Naive thymus-derived CD4-positive, alpha-beta T cell (primary cell): ENCODE measurements at regions of chr1 and their contacts with region 1.

Region 1: DNA sequence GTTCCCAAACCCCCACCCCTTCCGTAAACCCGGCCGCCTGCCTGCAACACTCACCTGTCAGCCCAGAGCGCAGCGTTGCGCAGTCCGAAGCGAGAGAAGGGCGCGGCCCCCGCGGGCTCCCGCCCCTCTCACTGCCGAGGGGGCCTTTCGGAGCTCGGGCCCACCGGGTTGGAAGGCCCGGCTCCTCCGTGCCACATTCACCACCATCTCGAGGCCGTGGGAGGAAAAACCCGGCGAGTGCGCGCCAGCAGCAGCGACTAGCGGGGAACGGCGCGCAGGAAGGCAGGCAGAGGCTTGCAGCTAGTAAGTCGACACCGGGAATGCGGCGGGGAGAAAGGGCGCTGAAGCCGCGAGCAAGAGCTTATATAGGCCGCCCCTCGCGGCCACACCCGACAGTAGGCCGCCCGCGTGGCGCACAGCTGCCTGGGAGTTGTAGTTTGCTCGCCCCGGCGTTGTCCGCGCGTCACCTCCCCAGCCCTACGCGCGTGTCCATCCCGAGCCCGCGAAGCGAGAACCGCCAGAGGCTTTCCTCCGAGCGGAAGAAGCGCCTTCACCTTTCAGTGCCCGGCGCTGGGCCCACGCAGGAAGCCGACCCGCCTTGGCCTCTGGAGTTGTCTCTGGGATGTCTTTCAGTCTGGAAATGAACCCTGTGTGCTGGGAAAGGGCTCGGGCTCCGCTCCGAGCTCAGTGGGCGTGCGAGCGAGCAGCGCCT is 10.4 kb upstream of the RAB42 start:
- DNase-seq: peak; percentile 85 to 96 (median 91)
- ATAC-seq: peak; percentile 95
- H3K4me3 ChIP-seq: peak overlapping the region; percentile 93
- H3K4me3 Mint-ChIP-seq: peak overlapping the region; percentile 94 to 99 (median 97)
- H3K27ac ChIP-seq: peak overlapping the region; percentile 84
- H3K27ac Mint-ChIP-seq: peak overlapping the region; percentile 86 to 96 (median 93)
- H3K4me1 ChIP-seq: peaks cover 20 to 23% of the 10 kb centered on the region in 2 donors
- H3K4me1 Mint-ChIP-seq: peaks cover 22 to 48% (median 37%) of the 10 kb centered on the region in 7 donors
- H3K27me3 ChIP-seq: no peaks in the 10 kb centered on the region
- H3K27me3 Mint-ChIP-seq: no peaks in the 10 kb centered on the region

Region 2: DNA sequence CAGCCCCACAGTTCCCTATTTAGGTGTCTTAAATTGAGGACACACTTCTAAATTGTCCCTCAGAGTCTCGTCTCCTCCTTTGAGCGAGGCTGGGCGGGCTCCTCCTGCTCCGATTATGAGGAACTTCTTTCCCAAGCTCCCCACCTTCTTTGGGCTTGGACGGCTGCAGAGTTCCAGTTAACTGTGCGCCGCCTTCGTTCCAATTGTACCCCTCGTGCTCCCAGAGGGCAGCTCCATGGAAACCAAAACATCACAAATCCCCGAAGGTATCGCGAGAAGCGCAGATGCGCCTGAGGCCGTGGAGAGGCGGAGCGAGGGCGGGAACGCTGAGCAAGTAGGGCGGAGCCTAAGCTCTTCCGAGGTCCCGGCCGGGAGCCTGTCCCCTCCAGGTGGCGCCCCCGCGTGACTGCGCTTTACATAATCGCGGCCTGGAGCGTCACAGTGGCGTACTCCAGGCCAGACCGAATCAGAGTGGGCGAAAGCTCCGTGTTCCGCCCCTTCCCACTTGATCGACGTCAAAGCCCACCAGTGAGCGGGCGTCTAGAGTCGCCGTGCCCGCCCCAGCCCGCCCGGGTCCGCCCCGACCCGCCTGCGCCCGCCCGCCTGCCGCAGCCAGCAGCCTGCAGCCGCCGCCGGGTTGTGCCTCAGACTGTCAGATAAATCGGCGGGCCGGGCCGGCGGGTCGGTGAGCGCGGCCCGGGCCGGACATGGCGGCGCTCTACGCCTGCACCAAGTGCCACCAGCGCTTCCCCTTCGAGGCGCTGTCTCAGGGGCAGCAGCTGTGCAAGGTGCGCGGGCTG is 856.1 kb before region 1 on chr1 and contains the start of gene FAM76A:
- CTCF ChIA-PET with region 1: no interaction called
- POLR2A ChIA-PET with region 1: no interaction called
- intact Hi-C with region 1: loop called in 1 of 2 experiments (anchors 5 kb)
- DNase-seq: peak; percentile 97 to 100 (median 99)
- ATAC-seq: peak; percentile 97
- H3K4me3 ChIP-seq: peak within 1 kb of the TSS; percentile 77
- H3K4me3 Mint-ChIP-seq: peak within 1 kb of the TSS; percentile 86 to 93 (median 90)
- H3K27ac ChIP-seq: peak within 1 kb of the TSS; percentile 91
- H3K27ac Mint-ChIP-seq: peak within 1 kb of the TSS; percentile 93 to 100 (median 98)
- H3K4me1 ChIP-seq: peaks cover 7 to 17% of the 10 kb centered on the region in 2 donors
- H3K4me1 Mint-ChIP-seq: peaks cover 9 to 35% (median 28%) of the 10 kb centered on the region in 7 donors
- H3K27me3 ChIP-seq: no peaks in the 10 kb centered on the region
- H3K27me3 Mint-ChIP-seq: no peaks in the 10 kb centered on the region
- total RNA-seq, gene FAM76A: 15.2 to 25.2 (median 22.2) TPM

Region 3: GRCh38 chr1:28552758-28553663 is 28.7 kb before region 1 on chr1 and contains the start of gene TRNAU1AP:
- CTCF ChIA-PET with region 1: interaction called, 3 read pairs
- POLR2A ChIA-PET with region 1: interaction called, 109 read pairs
- intact Hi-C with region 1: loop called (anchors 1 kb)
- DNase-seq: peak; percentile 92 to 98 (median 97)
- ATAC-seq: peak; percentile 98
- H3K4me3 ChIP-seq: peak within 1 kb of the TSS; percentile 95
- H3K4me3 Mint-ChIP-seq: peak within 1 kb of the TSS; percentile 94 to 99 (median 98)
- H3K27ac ChIP-seq: peak within 1 kb of the TSS; percentile 81
- H3K27ac Mint-ChIP-seq: peak within 1 kb of the TSS; percentile 94 to 99 (median 98)
- H3K4me1 ChIP-seq: peaks cover 0 to 15% of the 10 kb centered on the region in 2 donors
- H3K4me1 Mint-ChIP-seq: peaks cover 10 to 26% (median 19%) of the 10 kb centered on the region in 7 donors
- H3K27me3 ChIP-seq: no peaks in the 10 kb centered on the region
- H3K27me3 Mint-ChIP-seq: no peaks in the 10 kb centered on the region
- total RNA-seq, gene TRNAU1AP: 27.6 to 52.5 (median 40.9) TPM

Region 4: GRCh38 chr1:28591708-28592320 is 10.1 kb after region 1 on chr1 and contains the start of gene RAB42:
- CTCF ChIA-PET with region 1: no interaction called
- POLR2A ChIA-PET with region 1: interaction called, 16 read pairs
- intact Hi-C with region 1: no loop called
- DNase-seq: peak in 1 of 9 donors; percentile 14
- ATAC-seq: peak; percentile 70
- H3K4me3 ChIP-seq: no peak within 1 kb of the TSS
- H3K4me3 Mint-ChIP-seq: peak within 1 kb of the TSS; percentile 73 to 88 (median 81)
- H3K27ac ChIP-seq: peak within 1 kb of the TSS; percentile 14
- H3K27ac Mint-ChIP-seq: no peak within 1 kb of the TSS
- H3K4me1 ChIP-seq: no peaks in the 10 kb centered on the region
- H3K4me1 Mint-ChIP-seq: peaks cover 0 to 11% (median 4%) of the 10 kb centered on the region in 7 donors
- H3K27me3 ChIP-seq: no peaks in the 10 kb centered on the region
- H3K27me3 Mint-ChIP-seq: peaks cover 0 to 8% (median 5%) of the 10 kb centered on the region in 5 donors
- total RNA-seq, gene RAB42: 1.1 to 1.2 TPM in 2 of 5 experiments, not detected in the others

Region 5: DNA sequence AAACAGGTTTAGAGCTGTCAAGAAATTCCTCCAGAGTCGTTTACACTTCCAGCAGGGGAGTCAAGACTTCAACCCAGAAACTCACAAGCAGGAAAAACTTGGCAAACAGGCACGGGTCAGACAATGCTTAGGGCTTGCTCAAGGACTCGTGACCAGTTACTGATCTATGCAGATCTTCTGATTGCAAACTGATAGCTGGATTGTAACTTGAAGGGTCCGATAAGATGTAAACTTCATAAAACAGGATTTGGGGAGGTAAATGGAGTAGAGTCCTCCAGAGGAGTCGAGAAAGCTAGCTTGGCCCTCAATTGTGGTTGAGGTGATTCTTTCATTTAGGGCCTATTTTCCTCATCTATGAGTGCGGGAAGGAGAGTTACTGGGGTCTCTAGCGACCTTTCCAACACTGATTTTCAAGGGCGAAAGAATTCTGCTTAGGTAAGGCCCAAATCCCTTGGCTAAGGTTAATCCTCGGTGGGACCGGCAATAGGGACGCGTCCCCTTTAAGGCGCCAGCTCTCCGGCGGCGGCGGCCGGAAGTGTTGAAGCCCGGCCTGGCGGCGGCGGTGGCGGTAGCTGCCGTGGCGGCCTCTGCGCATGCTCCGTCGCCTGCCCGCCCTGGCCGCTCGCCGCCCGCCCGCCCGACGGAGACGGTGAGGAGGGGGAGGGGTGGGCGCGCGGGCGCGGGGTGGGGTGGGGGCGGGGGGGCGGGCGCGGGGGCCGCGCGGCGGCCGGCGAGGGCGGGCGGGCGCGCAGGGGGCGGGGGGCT is 86.7 kb after region 1 on chr1 and contains the start of gene GMEB1:
- CTCF ChIA-PET with region 1: no interaction called
- POLR2A ChIA-PET with region 1: interaction called, 18 read pairs
- intact Hi-C with region 1: loop called (anchors 1 kb)
- DNase-seq: peak; percentile 70 to 91 (median 82)
- ATAC-seq: peak; percentile 81
- H3K4me3 ChIP-seq: peak within 1 kb of the TSS; percentile 81
- H3K4me3 Mint-ChIP-seq: peak within 1 kb of the TSS; percentile 89 to 97 (median 94)
- H3K27ac ChIP-seq: peak within 1 kb of the TSS; percentile 98
- H3K27ac Mint-ChIP-seq: peak within 1 kb of the TSS; percentile 94 to 100 (median 98)
- H3K4me1 ChIP-seq: peaks cover 3 to 6% of the 10 kb centered on the region in 2 donors
- H3K4me1 Mint-ChIP-seq: peaks cover 11 to 37% (median 25%) of the 10 kb centered on the region in 7 donors
- H3K27me3 ChIP-seq: no peaks in the 10 kb centered on the region
- H3K27me3 Mint-ChIP-seq: no peaks in the 10 kb centered on the region
- total RNA-seq, gene GMEB1: 15.8 to 26.7 (median 18.4) TPM

Region 6: DNA sequence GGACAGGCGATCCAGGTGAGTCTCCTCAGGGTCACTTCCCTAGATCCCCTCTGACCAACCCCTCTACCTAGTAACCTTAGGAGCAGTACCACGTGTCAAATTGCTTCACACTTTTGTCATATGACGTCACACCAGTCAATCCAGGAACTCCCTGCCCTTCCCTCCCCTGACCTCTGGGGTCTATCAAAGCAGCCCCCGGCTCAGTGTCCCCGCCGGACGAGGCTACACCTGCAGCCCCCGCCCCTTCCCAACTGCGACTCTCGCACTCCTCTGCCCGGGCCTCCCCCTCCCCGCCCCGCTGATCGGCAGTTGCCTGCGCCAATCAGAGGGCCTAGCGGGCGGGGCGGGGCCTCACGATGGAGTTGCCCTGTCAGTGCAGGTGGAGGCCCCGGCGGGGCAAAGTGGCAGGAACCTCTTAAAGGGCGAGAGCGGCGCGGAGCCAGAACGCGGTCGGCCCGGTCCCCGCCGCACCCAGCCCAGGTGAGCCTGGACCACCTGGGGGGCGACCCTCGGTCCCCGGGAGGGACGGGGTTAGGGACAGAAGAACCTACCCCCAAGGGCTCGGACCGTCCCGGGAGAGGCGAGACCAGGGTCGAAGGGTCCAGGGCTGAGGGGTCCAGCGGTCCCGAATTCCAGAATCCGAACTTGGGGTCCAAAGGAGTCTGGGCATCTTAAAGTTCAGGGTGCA is 305.2 kb after region 1 on chr1:
- CTCF ChIA-PET with region 1: no interaction called
- POLR2A ChIA-PET with region 1: no interaction called
- intact Hi-C with region 1: loop called in 1 of 2 experiments (anchors 2 kb)
- DNase-seq: peak; percentile 87 to 97 (median 91)
- ATAC-seq: peak; percentile 83
- H3K4me3 ChIP-seq: peak overlapping the region; percentile 98
- H3K4me3 Mint-ChIP-seq: peak overlapping the region; percentile 70 to 95 (median 84)
- H3K27ac ChIP-seq: peak overlapping the region; percentile 79
- H3K27ac Mint-ChIP-seq: peak overlapping the region; percentile 81 to 98 (median 94)
- H3K4me1 ChIP-seq: peaks cover 32 to 36% of the 10 kb centered on the region in 2 donors
- H3K4me1 Mint-ChIP-seq: peaks cover 37 to 68% (median 50%) of the 10 kb centered on the region in 7 donors
- H3K27me3 ChIP-seq: no peaks in the 10 kb centered on the region
- H3K27me3 Mint-ChIP-seq: no peaks in the 10 kb centered on the region